ENCODE measurements at regions of chr11 and their contacts with region 1.

Region 1: GRCh38 chr11:73184953-73185671 is 33.0 kb upstream of the P2RY2 start:
- DNase-seq: no peak
- H3K4me3 ChIP-seq: peak overlapping the region in 1 of 4 donors; percentile 16
- H3K27ac ChIP-seq: peak overlapping the region; percentile 74 to 89 (median 82)
- H3K4me1 ChIP-seq: peaks cover 23 to 59% (median 34%) of the 10 kb centered on the region in 3 donors
- H3K27me3 ChIP-seq: no peaks in the 10 kb centered on the region
- CTCF ChIP-seq: peak; percentile 80 to 95 (median 88)
- POLR2A ChIP-seq: no peak

Region 2: DNA sequence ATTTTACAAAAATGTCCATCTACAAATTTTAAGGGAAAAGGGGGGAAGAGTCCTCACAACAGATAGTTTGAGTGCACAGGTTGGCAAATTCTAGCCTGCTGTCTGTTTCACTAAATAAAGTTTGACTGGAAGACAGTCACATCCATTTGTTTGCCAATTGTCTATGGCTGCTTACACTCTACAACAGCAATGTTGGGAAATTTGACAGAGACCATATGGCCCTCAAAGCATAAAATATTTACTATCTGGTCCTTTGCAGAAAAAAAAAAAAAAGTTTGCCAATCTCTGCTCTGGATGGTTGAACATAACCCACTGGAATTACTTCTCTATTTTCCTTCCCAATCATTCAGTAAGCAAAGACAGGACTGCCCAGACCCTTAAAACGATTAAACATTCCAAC is 131.1 kb before region 1 on chr11:
- intact Hi-C with region 1: no loop called
- DNase-seq: no peak
- H3K4me3 ChIP-seq: no peak overlapping the region
- H3K27ac ChIP-seq: no peak overlapping the region
- H3K4me1 ChIP-seq: no peaks in the 10 kb centered on the region
- H3K27me3 ChIP-seq: no peaks in the 10 kb centered on the region
- CTCF ChIP-seq: no peak
- POLR2A ChIP-seq: no peak

Region 3: DNA sequence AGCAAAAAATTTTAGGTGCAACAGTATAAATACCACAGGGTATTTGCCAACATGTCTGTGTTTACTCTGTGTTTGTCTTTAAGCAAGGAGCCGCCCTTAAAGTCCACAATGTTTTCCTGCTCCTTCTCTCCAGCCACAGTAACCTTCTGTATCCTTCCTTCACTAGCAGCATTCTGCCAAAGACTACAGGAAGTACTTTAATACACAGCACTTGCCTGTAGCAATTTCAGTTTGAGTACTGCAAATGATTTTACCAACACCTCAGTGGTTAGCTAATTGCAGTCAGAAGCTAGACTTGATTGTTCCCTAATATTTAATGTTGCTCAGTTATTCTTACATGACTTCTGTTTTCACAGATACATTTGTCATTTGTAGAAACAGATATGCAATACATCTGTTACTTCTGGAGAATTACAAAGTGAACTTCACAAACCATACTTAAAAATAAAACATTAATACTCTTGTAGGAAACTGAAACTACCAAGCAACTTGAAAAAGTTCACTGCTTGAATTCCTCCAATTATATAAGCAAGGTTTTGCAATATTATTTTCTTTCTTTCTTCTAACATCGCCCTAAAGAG is 112.1 kb before region 1 on chr11:
- intact Hi-C with region 1: no loop called
- DNase-seq: no peak
- H3K4me3 ChIP-seq: peak overlapping the region in 2 of 4 donors; percentile 5 to 22
- H3K27ac ChIP-seq: peak overlapping the region; percentile 1 to 42 (median 25)
- H3K4me1 ChIP-seq: peaks cover 0 to 21% (median 0%) of the 10 kb centered on the region in 3 donors
- H3K27me3 ChIP-seq: no peaks in the 10 kb centered on the region
- CTCF ChIP-seq: no peak
- POLR2A ChIP-seq: no peak

Region 4: GRCh38 chr11:73227588-73228211 is 42.6 kb after region 1 on chr11:
- intact Hi-C with region 1: loop called (anchors 5 kb)
- DNase-seq: no peak
- H3K4me3 ChIP-seq: no peak overlapping the region
- H3K27ac ChIP-seq: peak overlapping the region; percentile 54 to 81 (median 74)
- H3K4me1 ChIP-seq: peaks cover 8 to 64% (median 27%) of the 10 kb centered on the region in 3 donors
- H3K27me3 ChIP-seq: no peaks in the 10 kb centered on the region
- CTCF ChIP-seq: peak in 5 of 6 experiments; percentile 15 to 73 (median 57)
- POLR2A ChIP-seq: no peak

Region 5: DNA sequence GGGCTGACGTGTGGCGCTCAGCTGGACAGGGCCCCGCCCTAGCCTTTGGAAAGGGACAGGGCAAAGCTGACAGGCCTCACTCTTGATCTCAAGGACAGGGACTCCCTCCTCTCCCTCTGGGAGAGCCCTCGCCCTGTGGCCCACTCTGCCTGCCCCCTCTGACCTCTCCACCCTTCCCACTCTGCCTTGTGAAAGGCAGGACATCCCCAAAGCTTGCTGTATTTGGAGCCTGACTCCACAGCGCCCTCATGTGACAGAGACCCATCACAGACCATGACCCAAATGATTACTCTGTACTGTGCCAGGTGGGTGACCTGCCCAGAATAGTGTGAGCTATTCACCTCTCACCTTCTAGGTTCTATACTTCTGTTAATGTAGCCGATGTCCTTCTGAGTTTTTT is 51.7 kb after region 1 on chr11:
- intact Hi-C with region 1: loop called (anchors 5 kb)
- DNase-seq: no peak
- H3K4me3 ChIP-seq: no peak overlapping the region
- H3K27ac ChIP-seq: peak overlapping the region in 3 of 4 donors; percentile 8 to 27 (median 12)
- H3K4me1 ChIP-seq: peaks cover 12 to 51% (median 20%) of the 10 kb centered on the region in 3 donors
- H3K27me3 ChIP-seq: no peaks in the 10 kb centered on the region
- CTCF ChIP-seq: peak in 5 of 6 experiments; percentile 41 to 74 (median 42)
- POLR2A ChIP-seq: no peak

Region 6: GRCh38 chr11:73292525-73292894 is 107.4 kb after region 1 on chr11:
- intact Hi-C with region 1: loop called (anchors 5 kb)
- DNase-seq: no peak
- H3K4me3 ChIP-seq: no peak overlapping the region
- H3K27ac ChIP-seq: no peak overlapping the region
- H3K4me1 ChIP-seq: peaks cover 2 to 38% (median 20%) of the 10 kb centered on the region in 3 donors
- H3K27me3 ChIP-seq: no peaks in the 10 kb centered on the region
- CTCF ChIP-seq: no peak
- POLR2A ChIP-seq: no peak

Measured in esophagus squamous epithelium (tissue), 5 donors.